Activated T-helper 2 cell treated with anti-CD3 and anti-CD28 coated beads, Interferon-gamma antibody, Interleukin-2, Interleukin-4, amounts not matched to agents 10 μg/mL and 5 μg/mL and 100 μg/mL, durations not matched to agents 14 hours and 24 hours and 36 hours (primary cell): ENCODE measurements at regions of chr15 and their contacts with region 1.

Region 1: DNA sequence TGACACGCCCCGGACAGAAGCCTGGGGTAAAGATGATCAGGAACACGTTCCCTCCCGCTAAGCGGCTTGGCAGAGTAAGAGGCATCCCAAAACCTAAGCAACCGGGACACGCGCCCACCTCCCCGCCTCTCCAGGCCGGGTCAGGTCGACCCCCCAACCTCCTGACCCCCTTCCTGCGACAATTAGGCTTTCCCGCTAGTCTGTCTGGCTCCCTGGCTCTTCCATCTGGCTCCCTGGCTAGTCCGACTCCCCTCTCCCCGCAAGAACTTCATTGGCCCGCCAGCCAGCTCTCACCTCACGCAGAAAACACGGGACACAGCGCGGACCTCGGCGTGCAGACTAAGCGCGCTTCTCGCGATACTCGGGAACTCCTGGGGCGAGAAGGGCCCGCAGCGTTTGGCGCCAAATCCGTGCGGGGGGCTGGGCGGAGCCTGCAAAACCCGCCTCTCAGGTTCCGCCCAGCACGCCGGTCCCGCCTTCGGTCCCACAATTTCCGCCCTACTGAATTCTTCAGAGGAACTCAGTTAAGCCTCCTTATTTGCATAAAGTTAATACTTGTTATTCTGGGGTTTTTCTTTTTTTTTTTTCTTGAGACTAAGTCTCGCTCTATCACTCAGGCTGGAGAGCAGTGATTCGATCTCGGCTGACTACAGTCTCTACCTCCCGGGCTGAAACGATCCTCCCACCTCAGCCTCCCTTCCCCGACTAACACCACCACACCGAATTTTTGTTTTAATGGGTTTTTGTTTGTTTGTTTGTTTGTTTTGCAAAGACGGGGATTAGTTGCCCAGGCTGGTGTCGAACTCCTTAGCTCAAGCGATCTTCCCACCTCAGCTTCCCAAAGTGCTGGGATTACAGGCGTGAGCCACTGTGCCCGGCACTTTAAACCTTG is at the start of gene TIPIN:
- DNase-seq: peak; percentile 96
- H3K4me3 Mint-ChIP-seq: peak within 1 kb of the TSS; percentile 97
- H3K27ac Mint-ChIP-seq: peak within 1 kb of the TSS; percentile 97
- H3K4me1 Mint-ChIP-seq: peaks cover 25% of the 10 kb centered on the region
- H3K27me3 Mint-ChIP-seq: no peaks in the 10 kb centered on the region
- total RNA-seq, gene TIPIN: 42.4 and 43.3 TPM in 2 replicates

Region 2: GRCh38 chr15:66369773-66370651 is 13.4 kb after region 1 on chr15:
- intact Hi-C with region 1: loop called (anchors 1 kb)
- DNase-seq: peak; percentile 20
- H3K4me3 Mint-ChIP-seq: peak overlapping the region; percentile 73
- H3K27ac Mint-ChIP-seq: peak overlapping the region; percentile 97
- H3K4me1 Mint-ChIP-seq: peaks cover 19% of the 10 kb centered on the region
- H3K27me3 Mint-ChIP-seq: no peaks in the 10 kb centered on the region

Region 3: DNA sequence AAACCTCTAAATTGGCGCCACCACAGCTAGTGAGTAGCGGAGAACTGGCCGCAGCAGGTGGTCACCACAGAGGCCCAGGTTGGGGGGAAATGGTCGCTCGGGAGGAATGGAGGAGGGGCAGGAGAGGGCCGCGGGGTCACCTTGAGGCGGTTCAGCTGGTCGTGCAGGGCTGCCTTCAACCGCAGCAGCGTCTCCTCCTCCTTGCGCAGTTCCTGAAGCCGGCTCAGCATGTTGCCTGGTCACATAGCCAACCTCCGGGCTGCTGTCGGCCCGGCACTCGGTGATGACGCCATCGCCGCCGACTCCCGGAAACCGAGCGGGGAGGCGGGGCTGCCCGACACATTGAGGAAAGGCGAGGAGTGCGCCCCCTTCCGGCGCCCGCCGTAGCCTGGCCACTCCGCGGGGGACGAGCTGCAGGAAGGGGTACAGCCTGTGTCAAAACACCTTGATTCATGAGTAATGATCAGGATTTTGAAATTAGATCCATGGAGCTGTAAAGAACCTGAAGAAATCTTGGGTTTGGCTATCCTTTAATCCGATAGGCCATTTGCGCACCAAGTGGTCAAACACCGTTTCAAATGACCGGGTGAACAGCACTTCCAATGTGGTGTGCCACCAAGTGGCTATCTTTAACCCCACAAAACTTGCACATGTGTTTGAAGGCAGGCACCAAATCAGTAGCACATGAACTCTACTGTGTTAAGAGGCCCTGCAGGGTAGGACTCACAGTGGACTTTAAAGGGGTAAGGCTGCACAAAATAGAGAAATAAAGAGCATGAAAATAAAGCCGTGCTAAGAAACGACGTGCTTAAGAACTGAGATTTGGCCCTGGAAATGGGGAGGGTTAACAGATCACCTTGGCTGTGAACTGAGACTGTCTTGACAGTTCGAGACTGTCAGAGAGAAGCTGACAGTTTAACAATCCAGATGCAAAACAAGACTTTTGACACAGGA is 141.2 kb after region 1 on chr15 and contains the start of gene SNAPC5:
- intact Hi-C with region 1: loop called (anchors 1 kb)
- DNase-seq: peak; percentile 96
- H3K4me3 Mint-ChIP-seq: peak within 1 kb of the TSS; percentile 95
- H3K27ac Mint-ChIP-seq: peak within 1 kb of the TSS; percentile 93
- H3K4me1 Mint-ChIP-seq: peaks cover 35% of the 10 kb centered on the region
- H3K27me3 Mint-ChIP-seq: no peaks in the 10 kb centered on the region
- total RNA-seq, gene SNAPC5: 23.2 and 23.9 TPM in 2 replicates